IMR-90 (cell line): ENCODE measurements at regions of chr9 and their contacts with region 1.

Region 1: DNA sequence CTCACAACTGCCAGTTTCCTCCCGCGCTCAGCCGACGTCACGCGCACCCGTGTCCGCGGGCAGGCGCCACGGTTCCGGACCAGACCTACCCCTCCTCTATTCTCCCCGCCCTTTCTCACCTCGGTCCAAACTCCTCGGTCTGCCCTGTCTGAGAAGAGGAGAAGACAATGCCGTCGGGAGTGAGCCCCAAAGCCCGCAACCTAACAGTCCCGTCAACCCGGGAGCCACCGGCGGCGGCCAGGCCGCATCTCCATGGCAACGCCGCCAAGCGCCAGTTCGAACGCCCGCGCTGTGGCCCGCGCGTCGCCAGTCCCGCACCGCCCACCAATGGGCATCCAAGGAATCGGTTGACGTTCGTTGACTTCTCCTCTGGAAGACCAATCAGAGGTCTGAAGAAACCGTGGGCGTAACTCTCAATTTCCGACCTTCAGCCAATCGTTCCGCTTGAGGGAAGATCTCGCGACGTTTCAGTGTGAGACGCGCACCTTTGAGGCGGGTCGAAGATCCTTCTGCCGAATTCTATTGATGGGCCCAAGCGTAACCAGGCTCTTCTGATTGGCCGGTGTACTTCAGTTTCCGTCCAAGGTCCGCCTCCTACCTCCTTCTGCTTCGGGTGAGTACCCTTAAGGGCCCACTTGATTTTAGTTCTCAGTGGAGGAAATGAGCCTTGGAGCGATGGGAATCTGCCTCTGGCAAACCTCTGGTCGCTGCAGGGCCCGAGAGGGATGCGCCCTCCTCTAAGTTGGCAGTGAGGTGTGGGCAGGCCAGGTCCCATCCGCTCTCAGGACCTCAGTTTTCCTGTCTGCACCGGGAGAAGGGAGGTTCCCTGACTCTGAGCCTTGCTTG is at the starts of genes KIF24 and NUDT2:
- DNase-seq: peak; percentile 100
- ATAC-seq: peak; percentile 95
- H3K4me3 ChIP-seq: peak within 1 kb of the TSS; percentile 80
- H3K27ac ChIP-seq: peak within 1 kb of the TSS; percentile 93
- H3K4me1 ChIP-seq: peaks cover 8% of the 10 kb centered on the region
- H3K27me3 ChIP-seq: no peaks in the 10 kb centered on the region
- CTCF ChIP-seq: 0 out of 2 replicates have a peak, but pooled peaks have one; percentile 6
- POLR2A ChIP-seq: peak; percentile 94
- RAD21 ChIP-seq: no peak
- total RNA-seq, gene KIF24: 2.5 and 3.0 TPM in 2 replicates
- total RNA-seq, gene NUDT2: 33.9 and 45.0 TPM in 2 replicates

Region 2: DNA sequence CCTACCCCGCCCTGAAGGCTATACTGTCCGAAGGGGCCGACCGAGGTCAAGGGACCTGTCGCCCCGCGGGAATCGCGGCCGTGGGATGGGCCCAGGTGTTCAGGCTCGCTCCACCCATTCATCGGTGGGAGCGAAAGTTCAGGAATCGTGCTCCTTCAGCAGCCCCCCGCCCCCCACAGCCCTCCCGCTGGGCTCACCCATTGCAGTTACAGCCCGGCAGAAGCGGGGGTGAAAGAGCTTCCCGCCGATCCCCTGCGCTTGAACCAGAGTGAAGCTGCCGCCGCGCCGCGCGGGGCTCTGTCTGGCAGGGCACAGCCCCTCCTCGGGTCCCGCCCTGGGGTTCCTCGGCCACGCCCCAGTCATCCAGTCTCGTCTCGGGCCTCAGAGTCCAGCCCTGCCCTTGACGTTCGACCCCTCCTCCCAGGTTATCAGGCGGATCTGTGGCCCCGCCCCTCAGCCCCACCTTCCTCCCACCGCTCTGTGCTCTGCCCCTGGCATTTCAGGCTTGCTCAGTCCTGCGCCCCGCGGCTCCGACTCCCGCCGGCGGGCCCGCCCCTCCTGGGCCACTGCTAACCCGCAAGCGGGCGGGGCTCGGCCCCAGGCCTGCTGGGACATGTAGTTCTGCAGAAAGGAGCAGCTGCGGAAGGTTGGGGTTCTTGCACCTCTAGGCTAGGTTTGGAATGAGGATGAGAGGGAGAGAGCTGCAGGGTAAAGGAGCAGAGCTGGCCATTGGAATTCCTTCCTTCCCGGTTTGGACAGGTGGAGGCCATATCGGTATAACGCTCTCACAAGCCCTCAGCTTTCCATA is 47.6 kb after region 1 on chr9 and contains the start of gene MYORG:
- CTCF ChIA-PET with region 1: interaction called, 4 read pairs
- POLR2A ChIA-PET with region 1: no interaction called
- dilution Hi-C with region 1: no loop called
- in situ Hi-C with region 1: no loop called
- intact Hi-C with region 1: loop called (anchors 1 kb)
- DNase-seq: peak; percentile 65
- ATAC-seq: peak; percentile 84
- H3K4me3 ChIP-seq: peak within 1 kb of the TSS; percentile 54
- H3K27ac ChIP-seq: no peak within 1 kb of the TSS
- H3K4me1 ChIP-seq: peaks cover 8% of the 10 kb centered on the region
- H3K27me3 ChIP-seq: peaks cover 17% of the 10 kb centered on the region; the same call in 1 of the 2 replicates
- CTCF ChIP-seq: no peak
- POLR2A ChIP-seq: no peak
- RAD21 ChIP-seq: no peak
- total RNA-seq, gene MYORG: 0.36 and 0.56 TPM in 2 replicates

Region 3: GRCh38 chr9:34492051-34492450 is 162.8 kb after region 1 on chr9:
- CTCF ChIA-PET with region 1: no interaction called
- POLR2A ChIA-PET with region 1: no interaction called
- dilution Hi-C with region 1: no loop called
- in situ Hi-C with region 1: no loop called
- intact Hi-C with region 1: no loop called
- DNase-seq: no peak
- ATAC-seq: no peak
- H3K4me3 ChIP-seq: no peak overlapping the region
- H3K27ac ChIP-seq: no peak overlapping the region
- H3K4me1 ChIP-seq: no peaks in the 10 kb centered on the region
- H3K27me3 ChIP-seq: peaks cover 25% of the 10 kb centered on the region
- CTCF ChIP-seq: no peak
- POLR2A ChIP-seq: no peak
- RAD21 ChIP-seq: no peak